Right ventricle myocardium inferior (tissue), 1 donor: ENCODE measurements at regions of chr20 and their contacts with region 1.

Region 1: DNA sequence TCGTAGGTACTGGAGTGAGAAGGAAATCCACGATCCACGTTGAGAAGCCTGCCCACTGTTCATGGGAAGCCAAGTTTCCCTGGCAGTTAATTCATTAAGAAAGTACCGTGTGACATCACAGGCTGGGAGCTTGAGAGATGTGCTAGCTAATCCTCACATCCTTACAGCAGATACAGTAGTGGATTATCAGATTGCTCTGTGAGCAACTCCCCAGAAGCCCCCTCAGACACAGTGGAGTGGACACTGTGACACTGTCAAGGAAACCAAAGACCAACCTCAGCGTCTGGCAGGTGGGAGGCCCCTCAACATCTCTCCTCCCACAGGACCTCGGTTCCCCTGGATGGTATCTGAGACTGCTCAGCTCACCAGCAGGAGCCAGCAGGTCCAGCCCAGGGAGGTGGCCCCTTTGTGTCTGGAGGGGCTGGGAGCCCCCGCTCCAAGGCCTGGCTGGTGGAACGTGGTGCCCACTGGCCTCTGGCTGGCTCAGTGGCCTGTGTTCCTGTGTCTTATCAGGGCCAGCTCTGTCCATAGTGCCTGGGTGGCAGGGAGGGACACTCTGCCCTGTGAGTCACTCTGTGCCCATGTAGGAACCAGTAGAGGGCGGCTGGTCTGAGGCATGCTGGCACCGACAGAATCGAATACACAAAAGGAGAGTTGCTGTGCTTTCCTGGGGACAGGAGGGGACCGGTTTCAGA is 7.2 kb downstream of the PYGB start:
- DNase-seq: no peak
- ATAC-seq: peak; percentile 91

Region 2: GRCh38 chr20:25237610-25238318 is 17.4 kb before region 1 on chr20:
- intact Hi-C with region 1: no loop called
- DNase-seq: no peak
- ATAC-seq: peak; percentile 92

Region 3: GRCh38 chr20:25273541-25274358 is 18.6 kb after region 1 on chr20:
- intact Hi-C with region 1: loop called (anchors 2 kb)
- DNase-seq: peak; percentile 67
- ATAC-seq: no peak